GM13977 (cell line): ENCODE measurements at regions of chr4 and their contacts with region 1.

Region 1: GRCh38 chr4:163681208-163681821 is 186.8 kb downstream of the TMA16 start:
- DNase-seq: peak; percentile 56
- CTCF ChIP-seq: peak; percentile 66

Region 2: DNA sequence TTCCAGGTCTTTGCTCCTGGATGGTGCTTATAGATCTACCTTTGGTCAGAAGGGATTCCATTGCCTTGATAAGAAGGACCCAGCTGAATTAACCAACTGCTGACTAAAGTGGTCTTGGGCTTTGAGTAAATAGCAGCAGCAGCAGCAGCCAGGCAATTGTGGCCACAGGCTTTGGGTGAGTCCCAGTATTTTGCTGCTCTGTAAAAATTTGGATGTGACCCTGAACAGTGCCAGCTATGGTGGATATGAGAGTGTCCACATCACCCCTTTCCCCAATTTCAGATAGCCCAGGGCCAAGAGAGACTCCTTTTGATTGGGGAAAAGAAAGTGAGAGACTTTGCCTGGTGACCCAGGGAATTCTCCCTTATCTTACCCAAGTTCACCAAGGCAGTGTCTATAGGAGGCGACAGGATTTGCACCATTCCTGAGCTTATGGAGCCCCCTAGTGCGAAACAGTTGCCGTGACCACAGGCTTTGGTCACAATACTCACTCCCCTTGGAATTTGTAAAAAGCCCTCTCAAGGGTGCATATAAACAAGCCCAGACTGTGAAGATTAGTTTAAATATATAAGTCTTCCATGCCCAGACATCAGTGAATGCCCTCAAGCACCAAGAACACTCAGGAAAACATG is 331.2 kb after region 1 on chr4:
- in situ Hi-C with region 1: loop called (anchors 25 kb)
- DNase-seq: peak; percentile 5
- CTCF ChIP-seq: peak; percentile 57